Breast epithelium (tissue), 4 donors: ENCODE measurements at regions of chr11 and their contacts with region 1.

Region 1: GRCh38 chr11:116972691-116973090 is 125.5 kb downstream of the SIK3 start:
- DNase-seq: no peak
- H3K4me3 ChIP-seq: no peak overlapping the region
- H3K27ac ChIP-seq: peak overlapping the region; percentile 27 to 37
- H3K4me1 ChIP-seq: peaks cover 0 to 6% of the 10 kb centered on the region in 2 donors
- H3K27me3 ChIP-seq: no peaks in the 10 kb centered on the region
- CTCF ChIP-seq: no peak
- POLR2A ChIP-seq: no peak

Region 2: GRCh38 chr11:116605543-116606459 is 366.9 kb before region 1 on chr11:
- intact Hi-C with region 1: no loop called
- DNase-seq: peak in 1 of 2 donors; percentile 57
- H3K4me3 ChIP-seq: no peak overlapping the region
- H3K27ac ChIP-seq: no peak overlapping the region
- H3K4me1 ChIP-seq: no peaks in the 10 kb centered on the region
- H3K27me3 ChIP-seq: peaks cover 0 to 14% of the 10 kb centered on the region in 2 donors
- CTCF ChIP-seq: no peak
- POLR2A ChIP-seq: no peak

Region 3: DNA sequence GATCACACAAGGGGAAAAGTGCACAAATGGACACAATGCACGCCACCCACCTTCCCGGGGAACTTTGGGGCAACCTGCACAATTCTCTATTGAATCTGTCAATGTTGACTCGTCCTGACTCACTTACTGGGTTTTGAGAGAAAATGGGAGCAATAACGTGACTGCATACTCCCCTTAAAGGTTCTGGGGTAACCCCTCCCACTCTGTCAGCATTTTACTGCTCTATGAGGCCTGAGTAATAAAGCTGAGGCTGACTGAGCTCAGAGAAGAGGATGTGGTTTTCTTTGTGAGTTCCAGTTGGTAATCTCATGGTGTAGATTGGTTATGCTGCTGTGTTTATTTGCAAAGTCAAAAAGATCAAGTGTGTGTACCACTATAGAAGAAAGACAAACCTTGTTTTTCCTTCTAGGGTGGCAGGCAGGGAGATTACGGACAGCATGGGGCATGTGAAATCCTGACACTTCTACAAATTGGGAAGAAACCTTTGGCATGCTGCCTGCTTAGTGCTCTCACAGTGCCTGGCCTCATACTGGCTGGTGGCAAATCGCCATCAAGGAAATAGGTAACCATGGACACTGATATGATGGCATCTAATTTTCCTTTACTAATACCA is 119.1 kb before region 1 on chr11:
- intact Hi-C with region 1: no loop called
- DNase-seq: no peak
- H3K4me3 ChIP-seq: no peak overlapping the region
- H3K27ac ChIP-seq: peak overlapping the region in 1 of 2 donors; percentile 44
- H3K4me1 ChIP-seq: no peaks in the 10 kb centered on the region
- H3K27me3 ChIP-seq: no peaks in the 10 kb centered on the region
- CTCF ChIP-seq: no peak
- POLR2A ChIP-seq: no peak

Region 4: GRCh38 chr11:116960930-116961329 is 11.8 kb before region 1 on chr11:
- intact Hi-C with region 1: no loop called
- DNase-seq: peak in 1 of 2 donors; percentile 72
- H3K4me3 ChIP-seq: no peak overlapping the region
- H3K27ac ChIP-seq: peak overlapping the region; percentile 11 to 46
- H3K4me1 ChIP-seq: peaks cover 3 to 9% of the 10 kb centered on the region in 2 donors
- H3K27me3 ChIP-seq: no peaks in the 10 kb centered on the region
- CTCF ChIP-seq: no peak
- POLR2A ChIP-seq: no peak

Region 5: DNA sequence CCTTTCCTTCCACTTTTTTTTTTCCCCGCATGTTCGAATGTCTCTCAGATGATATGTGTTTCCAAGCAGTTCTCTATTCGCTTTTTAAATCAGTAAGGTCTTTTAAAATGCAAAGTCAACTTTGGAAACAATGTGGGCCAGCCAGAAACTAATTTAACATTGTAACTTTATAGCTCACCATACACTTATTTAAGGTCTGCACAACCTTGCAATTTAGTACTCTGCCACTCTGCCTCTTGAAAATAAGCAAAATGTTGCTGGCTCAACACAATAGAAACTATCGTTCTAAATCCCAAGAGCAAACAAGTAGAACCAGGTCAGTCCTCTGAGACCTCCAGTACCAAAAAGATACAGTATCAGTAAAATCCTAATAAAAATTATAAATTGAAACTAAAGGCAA is 16.5 kb after region 1 on chr11:
- intact Hi-C with region 1: loop called (anchors 2 kb)
- DNase-seq: no peak
- H3K4me3 ChIP-seq: no peak overlapping the region
- H3K27ac ChIP-seq: no peak overlapping the region
- H3K4me1 ChIP-seq: peaks cover 0 to 32% of the 10 kb centered on the region in 2 donors
- H3K27me3 ChIP-seq: no peaks in the 10 kb centered on the region
- CTCF ChIP-seq: no peak
- POLR2A ChIP-seq: no peak

Region 6: DNA sequence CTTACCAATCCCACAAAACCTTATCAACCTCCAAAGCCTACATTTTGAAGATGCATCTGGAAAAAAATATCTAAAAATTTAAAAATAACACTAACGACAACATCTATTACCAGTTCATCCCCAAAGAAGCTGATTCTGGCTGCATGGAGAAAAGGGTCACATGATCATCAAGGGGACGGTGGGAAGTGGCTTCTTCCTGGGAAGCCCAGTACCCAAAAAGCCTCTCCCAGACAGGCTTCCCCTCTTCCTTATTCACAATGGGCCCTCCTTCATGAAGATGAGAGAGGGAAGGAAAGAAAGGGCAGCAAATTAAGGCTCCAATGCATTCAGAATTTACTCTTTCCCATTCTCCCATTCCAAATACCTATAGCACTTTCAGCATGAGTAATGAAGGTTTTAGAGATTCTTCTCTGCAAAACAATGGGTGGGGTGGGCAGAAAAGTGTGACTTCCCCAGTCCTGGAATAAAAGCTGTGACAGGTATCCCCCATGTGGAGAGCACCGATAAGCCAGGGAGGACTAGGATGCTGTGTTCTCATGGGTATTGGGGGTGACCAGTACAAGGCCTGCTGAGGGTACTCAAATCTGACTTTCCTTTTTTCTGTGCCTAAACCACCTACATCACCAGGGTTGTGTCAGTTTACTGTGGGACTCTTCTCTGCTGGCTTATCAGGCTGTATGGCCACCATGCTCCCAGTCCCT is 37.4 kb after region 1 on chr11:
- intact Hi-C with region 1: loop called (anchors 2 kb)
- DNase-seq: no peak
- H3K4me3 ChIP-seq: no peak overlapping the region
- H3K27ac ChIP-seq: peak overlapping the region in 1 of 2 donors; percentile 10
- H3K4me1 ChIP-seq: no peaks in the 10 kb centered on the region
- H3K27me3 ChIP-seq: no peaks in the 10 kb centered on the region
- CTCF ChIP-seq: no peak
- POLR2A ChIP-seq: no peak

Region 7: GRCh38 chr11:117026593-117027330 is 54.1 kb after region 1 on chr11:
- intact Hi-C with region 1: no loop called
- DNase-seq: no peak
- H3K4me3 ChIP-seq: no peak overlapping the region
- H3K27ac ChIP-seq: no peak overlapping the region
- H3K4me1 ChIP-seq: no peaks in the 10 kb centered on the region
- H3K27me3 ChIP-seq: no peaks in the 10 kb centered on the region
- CTCF ChIP-seq: no peak
- POLR2A ChIP-seq: no peak